Mucosa of descending colon (tissue), 3 donors: ENCODE measurements at regions of chr11 and their contacts with region 1.

Region 1: DNA sequence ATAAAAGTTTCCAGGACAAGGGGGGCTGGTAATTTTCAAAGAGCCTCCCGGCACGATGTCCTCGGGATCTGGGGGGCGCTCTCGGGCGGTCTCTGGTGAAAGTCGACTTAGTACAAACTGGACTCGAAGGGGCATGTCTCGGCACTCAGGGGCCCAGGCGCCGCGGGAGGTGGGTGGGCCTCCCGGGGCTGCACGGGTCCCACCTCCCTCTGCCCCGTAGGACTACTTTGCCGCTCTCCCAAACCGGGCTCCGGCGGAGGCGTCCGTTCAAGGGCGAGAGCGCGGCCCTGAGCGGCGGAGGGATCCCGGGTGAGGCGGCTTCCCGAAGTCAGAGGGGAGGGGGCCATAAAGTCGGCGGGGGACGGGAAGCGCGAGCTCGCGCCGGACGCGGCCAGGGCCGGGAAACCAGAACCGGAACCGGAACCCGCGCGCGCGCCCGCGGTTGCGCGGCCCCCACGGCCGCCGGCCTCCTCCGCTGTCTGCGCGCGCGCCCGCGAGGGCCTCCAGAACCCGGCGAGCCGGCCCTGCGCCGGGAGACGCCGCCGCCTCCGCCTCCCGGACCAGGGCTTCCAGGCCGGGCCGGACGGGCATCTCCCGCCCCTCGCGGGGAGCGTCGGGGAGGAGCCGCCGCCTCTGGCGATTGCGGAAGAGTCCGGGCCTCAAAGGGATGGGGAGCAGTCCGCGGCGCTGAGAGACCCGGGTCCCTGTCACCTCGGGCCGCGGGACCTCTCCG is at the start of gene ARHGEF12:
- DNase-seq: peak; percentile 96 to 97 (median 97)
- ATAC-seq: peak; percentile 87
- H3K4me3 ChIP-seq: peak within 1 kb of the TSS; percentile 62
- H3K4me1 ChIP-seq: peaks cover 29% of the 10 kb centered on the region
- CTCF ChIP-seq: no peak
- total RNA-seq, gene ARHGEF12: 88.2 to 119 (median 114) TPM

Region 2: DNA sequence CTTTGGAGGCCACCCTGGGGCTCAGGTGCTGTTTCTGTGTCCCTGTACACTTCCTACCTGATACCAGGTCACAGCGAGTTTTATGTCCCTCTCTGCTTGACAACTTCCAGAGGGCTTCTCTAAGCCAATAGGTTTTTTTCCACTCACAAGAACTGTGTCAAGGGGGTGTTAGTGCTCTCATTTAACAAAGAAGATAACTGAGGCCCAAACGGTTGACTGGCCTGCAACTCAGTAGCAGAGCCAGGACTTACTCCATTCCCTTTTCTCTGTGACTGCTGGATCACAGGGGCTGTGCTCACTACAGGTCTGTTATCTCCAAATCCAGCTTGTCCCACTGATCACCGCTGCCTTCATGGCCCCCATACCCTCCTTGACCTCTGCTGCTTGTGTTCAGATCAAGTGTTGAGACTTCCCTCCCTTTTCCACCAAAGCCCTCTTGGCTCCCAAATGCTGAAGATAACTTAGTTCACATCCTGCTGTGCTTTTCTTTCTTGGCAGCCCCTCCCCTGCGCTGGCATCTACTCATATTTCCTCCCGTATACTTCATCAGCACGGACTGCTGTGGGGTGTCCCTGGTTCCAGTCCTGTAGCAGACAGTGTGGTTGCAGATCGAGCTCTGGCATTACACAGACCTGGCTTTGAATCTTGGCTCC is 54.8 kb before region 1 on chr11:
- intact Hi-C with region 1: no loop called
- DNase-seq: no peak
- ATAC-seq: no peak
- H3K4me3 ChIP-seq: no peak overlapping the region
- H3K4me1 ChIP-seq: no peaks in the 10 kb centered on the region
- CTCF ChIP-seq: no peak

Region 3: DNA sequence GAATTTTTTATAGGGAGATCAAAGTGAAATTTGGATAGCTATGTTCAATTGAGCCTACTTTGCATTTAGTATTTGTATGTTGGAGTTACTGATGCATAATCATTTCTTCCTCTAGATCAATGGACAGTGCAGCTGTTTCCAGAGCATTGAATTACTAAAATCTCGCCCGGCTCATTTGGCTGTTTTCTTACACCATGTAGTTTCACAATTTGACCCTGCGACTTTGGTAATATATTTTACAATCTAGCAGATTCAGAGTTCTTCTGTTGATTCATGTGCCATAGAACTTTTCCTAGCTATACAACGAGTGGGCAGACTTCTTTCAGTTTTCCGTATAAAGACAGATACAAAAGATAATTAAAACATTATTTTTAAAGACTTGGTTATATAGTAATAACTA is 105.5 kb after region 1 on chr11:
- intact Hi-C with region 1: loop called in 1 of 2 experiments (anchors 10 kb)
- DNase-seq: no peak
- ATAC-seq: no peak
- H3K4me3 ChIP-seq: no peak overlapping the region
- H3K4me1 ChIP-seq: no peaks in the 10 kb centered on the region
- CTCF ChIP-seq: no peak